Activated CD4-positive, alpha-beta T cell treated with anti-CD3 and anti-CD28 coated beads, Interleukin-2, amount 10 ng/mL, durations not matched to agents 24 days and 14 days (primary cell): ENCODE measurements at regions of chr2 and their contacts with region 1.

Region 1: GRCh38 chr2:65366595-65367125 is 65.7 kb downstream of the SPRED2 start:
- DNase-seq: peak; percentile 65
- H3K4me3 Mint-ChIP-seq: no peak overlapping the region
- H3K27ac Mint-ChIP-seq: no peak overlapping the region
- H3K4me1 Mint-ChIP-seq: peaks cover 26% of the 10 kb centered on the region
- H3K27me3 Mint-ChIP-seq: peaks cover 5% of the 10 kb centered on the region

Region 2: GRCh38 chr2:65377556-65378192 is 11.0 kb after region 1 on chr2:
- intact Hi-C with region 1: loop called (anchors 1 kb)
- DNase-seq: peak; percentile 69
- H3K4me3 Mint-ChIP-seq: no peak overlapping the region
- H3K27ac Mint-ChIP-seq: peak overlapping the region; percentile 21
- H3K4me1 Mint-ChIP-seq: peaks cover 35% of the 10 kb centered on the region
- H3K27me3 Mint-ChIP-seq: peaks cover 5% of the 10 kb centered on the region